ENCODE measurements at regions of chr13 and their contacts with region 1.

Region 1: GRCh38 chr13:40682449-40683240 is 16.2 kb upstream of the FOXO1 start:
- DNase-seq: no peak

Region 2: DNA sequence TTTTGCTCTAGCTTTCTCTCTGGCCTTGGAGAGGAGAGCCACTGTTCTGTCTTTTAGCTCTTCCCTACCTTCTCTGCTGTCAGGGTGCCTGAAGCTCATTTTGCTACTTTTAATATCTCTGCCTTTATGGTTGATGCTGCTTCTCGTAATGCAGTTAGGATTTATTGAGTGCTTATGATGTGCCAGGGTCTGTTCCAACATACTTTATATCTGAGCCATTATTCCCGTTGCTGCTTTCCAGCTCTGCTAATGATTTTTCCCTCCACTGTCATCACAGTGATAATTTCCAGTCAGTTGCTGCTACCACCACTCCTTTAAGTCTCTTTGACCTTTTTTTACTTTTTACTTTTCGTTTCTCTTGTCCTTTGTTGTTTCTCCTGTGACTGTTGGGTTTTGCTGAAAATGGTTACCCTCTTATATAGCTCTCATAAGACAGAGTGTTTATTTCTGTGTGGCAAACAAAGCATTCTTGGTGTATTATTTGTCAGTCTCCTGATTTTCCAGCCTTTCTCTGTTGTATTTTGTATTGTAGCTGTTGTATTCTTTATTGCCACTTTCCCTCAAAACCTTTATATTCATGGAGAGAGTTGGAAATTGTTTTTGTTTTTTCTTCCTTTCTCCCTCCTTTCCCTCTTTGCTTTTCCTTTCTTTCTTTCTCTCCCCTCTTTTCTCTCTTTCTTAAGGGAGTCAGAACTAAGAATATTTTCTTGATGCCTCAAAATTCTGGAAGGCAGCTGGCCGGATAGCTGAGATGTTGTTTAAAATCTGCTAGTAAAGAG is 989.8 kb before region 1 on chr13:
- intact Hi-C with region 1: loop called (anchors 5 kb)
- DNase-seq: no peak

Region 3: DNA sequence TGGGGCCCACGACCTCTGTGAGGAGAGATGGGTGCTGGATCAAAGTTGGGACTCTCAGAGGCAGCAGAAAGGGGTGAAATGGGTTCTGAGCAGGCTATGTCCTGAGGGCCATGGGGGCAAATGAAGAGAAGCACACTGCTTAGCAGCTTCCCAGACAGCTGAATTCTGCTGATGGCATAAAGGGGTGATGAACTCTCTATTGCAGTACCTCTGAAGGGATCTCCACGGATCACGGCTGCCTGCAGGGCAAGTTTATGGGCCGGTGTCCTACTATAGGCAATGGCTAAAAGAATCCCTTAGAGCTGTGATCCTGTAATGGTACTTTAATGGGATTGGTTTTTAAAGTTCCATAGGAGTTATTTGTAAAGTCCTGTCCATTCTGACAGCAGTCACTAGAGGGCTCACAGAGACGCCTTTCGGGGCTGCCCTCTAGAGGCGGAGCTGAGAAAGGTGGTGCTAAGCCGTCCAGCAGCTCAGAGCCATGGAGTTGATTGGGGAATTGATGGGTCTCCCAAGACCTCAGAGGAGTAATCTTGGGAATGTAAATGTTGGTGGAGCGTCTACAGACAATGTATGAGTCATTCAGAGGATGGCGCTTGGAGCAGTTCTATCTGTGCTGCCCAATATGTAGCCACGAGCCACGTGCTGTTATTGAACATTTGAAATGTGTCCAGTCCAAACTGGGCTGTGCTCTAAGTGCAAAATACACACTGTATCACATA is 739.9 kb before region 1 on chr13:
- intact Hi-C with region 1: loop called (anchors 5 kb)
- DNase-seq: no peak

Region 4: DNA sequence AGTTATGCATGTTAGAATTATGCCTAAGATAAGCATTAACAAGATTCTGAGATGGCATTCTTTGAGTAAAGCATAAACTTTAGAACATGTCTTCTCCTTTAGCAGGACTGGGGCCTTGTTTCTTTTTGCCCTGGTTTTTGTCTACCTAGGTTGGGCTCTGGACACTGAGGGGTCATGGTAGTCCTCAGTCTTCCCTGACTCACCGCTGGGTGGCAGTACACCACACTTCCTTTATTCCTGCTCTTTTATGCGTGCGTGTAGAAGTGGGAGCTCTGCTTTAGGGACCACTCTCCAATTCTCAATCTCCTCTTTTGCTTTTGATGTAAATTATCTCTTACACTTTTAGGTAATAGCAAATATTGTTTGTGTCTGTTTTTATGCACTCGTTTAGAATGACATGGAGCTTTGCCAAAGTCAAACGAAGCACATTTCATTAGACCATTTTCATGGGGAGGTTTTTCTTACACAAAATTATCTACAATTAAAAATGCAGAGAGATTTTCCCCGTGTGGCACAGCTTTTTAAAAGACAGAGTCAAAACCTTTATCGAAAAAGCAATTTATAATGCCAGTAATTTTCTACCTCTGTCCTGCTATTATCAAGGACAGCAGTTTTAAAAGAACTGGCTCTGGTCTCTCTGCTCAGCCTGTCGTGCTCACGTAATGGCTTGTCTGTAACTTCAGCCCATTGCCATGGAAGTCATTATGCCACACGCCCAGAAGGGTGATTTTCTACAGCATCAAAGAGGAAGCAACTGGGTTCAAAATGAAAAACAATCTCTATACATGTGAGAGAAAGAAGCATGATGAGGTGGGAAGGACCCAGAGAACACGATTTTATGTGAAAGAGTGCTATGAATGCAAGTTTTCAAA is 613.2 kb before region 1 on chr13:
- intact Hi-C with region 1: loop called (anchors 2 kb)
- DNase-seq: peak; percentile 83

Measured in cardiac septum (tissue), 1 donor.